K562 (cell line): ENCODE measurements at regions of chr5 and their contacts with region 1.

Region 1: DNA sequence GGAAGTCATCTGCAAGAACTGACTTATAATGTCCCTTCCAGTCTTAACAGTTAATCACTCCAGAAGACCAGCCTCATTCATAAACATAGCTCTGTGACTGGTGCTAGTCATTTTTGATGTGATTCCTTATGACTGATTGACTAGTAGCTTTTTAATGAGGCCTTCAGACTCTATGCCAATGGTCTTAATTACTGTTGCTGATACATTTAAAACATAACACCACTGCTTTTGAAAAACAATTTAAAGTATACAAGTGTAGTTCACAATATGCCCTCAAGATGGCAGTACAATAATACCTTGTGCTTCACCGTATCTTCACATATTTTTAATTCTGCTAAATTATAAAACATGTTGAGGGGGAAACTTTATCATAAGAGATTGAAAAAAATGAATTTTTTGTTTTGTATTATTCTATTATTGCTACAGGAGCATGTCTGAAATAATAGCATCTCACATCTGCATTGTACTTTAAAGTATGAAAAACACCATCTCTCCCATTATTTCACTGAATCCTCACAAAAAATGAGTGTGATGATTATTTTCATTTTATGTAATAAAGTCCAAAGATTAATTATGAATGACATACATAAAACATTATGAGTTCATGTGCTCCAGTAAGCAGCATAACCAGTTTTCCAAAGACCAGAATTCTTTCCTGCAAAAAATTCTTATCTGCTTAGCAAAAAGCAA is 55.2 kb upstream of the SHISAL2B start:
- DNase-seq: peak; percentile 18 to 37 (median 20)
- ATAC-seq: no peak
- H3K4me3 ChIP-seq: no peak overlapping the region
- H3K27ac ChIP-seq: no peak overlapping the region
- H3K4me1 ChIP-seq: peaks cover 0 to 7% of the 10 kb centered on the region in 2 experiments; a peak in 2 of 5 replicates
- H3K27me3 ChIP-seq: peaks cover 0 to 6% of the 10 kb centered on the region in 2 experiments; a peak in 2 of 5 replicates
- CTCF ChIP-seq: peak; percentile 46 to 78 (median 53); a peak in 5 of 6 replicates
- EP300 ChIP-seq: no peak
- POLR2A ChIP-seq: no peak
- RAD21 ChIP-seq: peak; percentile 76 to 89

Region 2: DNA sequence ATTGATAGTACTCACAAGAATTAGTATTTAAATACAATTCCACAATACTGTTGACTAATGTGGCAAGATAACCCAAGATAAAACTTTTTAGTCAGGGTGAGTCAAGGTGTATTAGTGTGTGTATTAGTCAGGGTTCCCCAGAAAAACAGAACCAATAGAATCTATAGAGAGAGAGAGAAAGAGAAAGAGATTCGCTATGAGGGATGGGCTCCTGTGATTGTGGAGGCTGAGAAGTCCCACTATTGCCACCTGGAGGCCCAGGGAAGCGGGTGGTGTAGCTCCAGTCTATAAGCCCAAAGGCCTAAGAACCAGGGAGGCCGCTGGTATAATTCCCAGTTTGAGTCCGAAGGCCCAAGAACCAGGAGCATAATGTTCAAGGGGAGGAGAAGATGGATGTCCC is 45.1 kb after region 1 on chr5:
- CTCF ChIA-PET with region 1: interaction called, 3 read pairs
- POLR2A ChIA-PET with region 1: no interaction called
- in situ Hi-C with region 1: no loop called
- intact Hi-C with region 1: loop called (anchors 5 kb)
- DNase-seq: peak in 1 of 4 experiments; percentile 22
- ATAC-seq: peak; percentile 78
- H3K4me3 ChIP-seq: no peak overlapping the region
- H3K27ac ChIP-seq: no peak overlapping the region
- H3K4me1 ChIP-seq: no peaks in the 10 kb centered on the region
- H3K27me3 ChIP-seq: peaks cover 3 to 4% of the 10 kb centered on the region in 2 experiments; a peak in 1 of 5 replicates
- CTCF ChIP-seq: peak; percentile 25 to 33 (median 28); a peak in 3 of 6 replicates
- EP300 ChIP-seq: no peak
- POLR2A ChIP-seq: no peak
- RAD21 ChIP-seq: peak in 1 of 2 experiments; percentile 21; a peak in 1 of 4 replicates

Region 3: GRCh38 chr5:64775291-64775690 is 140.1 kb after region 1 on chr5:
- CTCF ChIA-PET with region 1: no interaction called
- POLR2A ChIA-PET with region 1: no interaction called
- in situ Hi-C with region 1: loop called (anchors 5 kb)
- intact Hi-C with region 1: no loop called
- DNase-seq: no peak
- ATAC-seq: no peak
- H3K4me3 ChIP-seq: no peak overlapping the region
- H3K27ac ChIP-seq: no peak overlapping the region
- H3K4me1 ChIP-seq: no peaks in the 10 kb centered on the region
- H3K27me3 ChIP-seq: no peaks in the 10 kb centered on the region
- CTCF ChIP-seq: no peak
- EP300 ChIP-seq: no peak
- POLR2A ChIP-seq: no peak
- RAD21 ChIP-seq: no peak

Region 4: DNA sequence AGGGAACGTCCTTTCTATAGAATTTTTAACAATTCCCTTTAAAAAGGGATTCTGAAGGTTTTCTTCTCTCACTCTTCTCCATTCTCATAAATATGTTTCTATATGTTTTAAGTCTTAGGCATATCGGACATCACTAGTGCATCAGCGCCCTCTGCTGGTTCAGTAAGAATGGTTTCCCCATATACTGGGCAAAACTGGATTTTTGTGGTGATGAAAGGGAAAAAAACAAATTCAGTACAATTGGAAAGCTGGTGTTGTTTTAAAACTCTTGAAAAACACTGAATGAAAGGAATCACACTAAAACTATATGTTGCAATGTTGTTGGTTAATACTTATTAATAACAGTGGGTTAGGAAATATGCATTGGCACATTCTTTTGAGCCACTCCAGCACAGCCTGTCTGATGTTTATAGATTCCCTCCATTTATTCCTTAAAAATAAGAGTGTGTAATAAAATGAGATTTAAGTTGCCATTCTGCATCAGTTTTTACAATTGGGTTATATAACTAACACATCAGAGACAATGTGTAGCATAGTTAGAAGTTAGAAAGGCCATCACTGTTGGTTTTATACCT is 149.4 kb after region 1 on chr5:
- CTCF ChIA-PET with region 1: interaction called, 19 read pairs
- POLR2A ChIA-PET with region 1: no interaction called
- in situ Hi-C with region 1: loop called (anchors 5 kb)
- intact Hi-C with region 1: loop called (anchors 1 kb)
- DNase-seq: peak; percentile 31 to 84 (median 34)
- ATAC-seq: peak; percentile 93
- H3K4me3 ChIP-seq: no peak overlapping the region
- H3K27ac ChIP-seq: no peak overlapping the region
- H3K4me1 ChIP-seq: no peaks in the 10 kb centered on the region
- H3K27me3 ChIP-seq: no peaks in the 10 kb centered on the region
- CTCF ChIP-seq: peak; percentile 63 to 89 (median 74)
- EP300 ChIP-seq: no peak
- POLR2A ChIP-seq: no peak
- RAD21 ChIP-seq: peak; percentile 83 to 87

Region 5: DNA sequence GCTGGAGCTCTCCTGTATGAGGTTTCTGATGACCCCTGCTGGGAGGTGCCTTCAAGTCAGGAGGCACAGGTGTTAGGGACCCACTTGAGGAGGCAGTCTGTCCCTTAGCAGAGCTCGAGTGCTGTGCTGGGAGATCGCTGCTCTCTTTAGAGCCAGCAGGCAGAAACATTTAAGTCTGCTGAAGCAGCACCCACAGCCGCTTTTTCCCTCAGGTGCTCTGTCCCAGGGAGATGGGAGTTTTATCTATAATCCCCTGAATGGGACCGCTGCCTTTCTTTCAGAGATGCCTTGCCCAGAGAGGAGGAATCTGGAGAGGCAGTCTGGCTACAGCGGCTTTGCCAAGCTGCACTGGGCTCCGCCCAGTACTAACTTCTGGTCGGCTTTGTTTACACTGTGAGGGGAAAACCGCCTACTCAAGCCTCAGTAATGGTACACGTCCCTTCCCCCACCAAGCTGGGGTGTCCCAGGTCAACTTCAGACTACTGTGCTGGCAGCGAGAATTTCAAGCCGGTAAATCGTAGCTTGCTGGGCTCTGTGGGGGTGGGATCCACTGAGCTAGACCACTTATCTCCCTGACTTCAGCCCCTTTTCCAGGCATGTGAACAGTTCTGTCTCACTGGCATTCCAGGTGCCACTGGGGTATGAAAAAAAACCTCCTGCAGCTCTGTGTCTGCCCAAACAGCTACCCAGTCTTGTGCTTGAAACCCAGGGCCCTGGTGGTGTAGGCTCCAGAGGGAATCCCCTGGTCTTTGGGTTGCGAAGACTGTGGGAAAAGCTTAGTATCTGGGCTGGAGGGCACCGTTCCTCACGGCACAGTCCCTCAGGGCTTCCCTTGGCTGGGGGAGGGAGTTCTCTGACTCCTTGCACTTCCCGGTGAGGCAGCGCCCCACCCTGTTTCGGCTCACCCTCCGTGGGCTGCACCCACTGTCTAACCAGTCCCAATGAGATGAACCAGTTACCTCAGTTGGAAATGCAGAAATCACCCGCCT is 304.7 kb after region 1 on chr5:
- CTCF ChIA-PET with region 1: no interaction called
- POLR2A ChIA-PET with region 1: no interaction called
- in situ Hi-C with region 1: no loop called
- intact Hi-C with region 1: loop called (anchors 10 kb)
- DNase-seq: peak in 2 of 4 experiments; percentile 23 to 60
- ATAC-seq: peak; percentile 92
- H3K4me3 ChIP-seq: no peak overlapping the region
- H3K27ac ChIP-seq: no peak overlapping the region
- H3K4me1 ChIP-seq: peaks cover 0 to 3% of the 10 kb centered on the region in 2 experiments; a peak in 3 of 5 replicates
- H3K27me3 ChIP-seq: no peaks in the 10 kb centered on the region
- CTCF ChIP-seq: no peak
- EP300 ChIP-seq: no peak
- POLR2A ChIP-seq: no peak
- RAD21 ChIP-seq: 0 out of 4 replicates have a peak, but pooled peaks of 1 of the 2 experiments have one; percentile 8